ENCODE measurements at regions of chr5 and their contacts with region 1.

Region 1: GRCh38 chr5:75078027-75078426 is 25.7 kb upstream of the GCNT4 start:
- DNase-seq: no peak

Region 2: GRCh38 chr5:74316064-74316679 is 761.9 kb before region 1 on chr5:
- intact Hi-C with region 1: loop called in 1 of 2 experiments (anchors 5 kb)
- DNase-seq: peak; percentile 84